ENCODE measurements at regions of chr10 and their contacts with region 1.

Region 1: DNA sequence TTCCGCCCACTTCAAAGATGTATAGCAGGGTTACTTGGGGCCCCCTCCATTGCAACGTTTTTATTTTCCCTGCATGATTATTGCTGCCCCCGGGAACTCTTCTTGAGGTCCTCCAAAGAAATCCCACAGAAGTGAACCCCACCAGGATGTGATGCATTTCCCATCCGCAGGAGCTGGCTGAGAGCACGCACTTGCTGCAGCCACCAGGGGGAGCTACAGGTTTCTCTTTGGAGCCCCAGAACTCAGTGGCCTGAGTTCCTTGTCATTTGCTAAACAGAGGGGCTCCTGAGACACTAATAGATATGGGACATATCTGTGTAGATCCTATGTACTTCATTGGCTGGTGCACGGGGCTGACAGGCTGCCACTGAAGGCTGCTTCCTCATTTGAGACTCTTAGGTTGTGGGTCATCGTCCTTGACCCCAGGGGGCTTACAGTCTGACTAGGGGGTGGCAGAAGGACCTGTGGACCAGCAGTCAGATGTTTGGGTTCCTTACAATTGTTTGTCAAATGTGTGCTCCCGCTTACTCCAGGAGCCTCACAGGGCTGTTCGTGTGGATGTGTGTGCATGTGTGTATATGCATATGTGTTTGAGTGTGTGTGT is 52.3 kb upstream of the ENO4 start:
- DNase-seq: peak; percentile 49 to 90
- H3K4me3 ChIP-seq: no peak overlapping the region
- H3K27ac ChIP-seq: no peak overlapping the region
- H3K4me1 ChIP-seq: peaks cover 2 to 8% (median 5%) of the 10 kb centered on the region in 4 experiments; a peak in 6 of 7 replicates
- H3K27me3 ChIP-seq: 0 out of 7 replicates have a peak, but pooled peaks cover 0 to 4% (median 1%) of the 10 kb centered on the region in 4 experiments
- CTCF ChIP-seq: peak; percentile 91 to 97 (median 93)
- EP300 ChIP-seq: no peak
- POLR2A ChIP-seq: no peak
- RAD21 ChIP-seq: peak; percentile 99

Region 2: GRCh38 chr10:116615199-116615776 is 181.7 kb before region 1 on chr10:
- CTCF ChIA-PET with region 1: no interaction called
- POLR2A ChIA-PET with region 1: no interaction called
- DNase-seq: no peak
- H3K4me3 ChIP-seq: no peak overlapping the region
- H3K27ac ChIP-seq: no peak overlapping the region
- H3K4me1 ChIP-seq: no peaks in the 10 kb centered on the region; a peak in 1 of 7 replicates
- H3K27me3 ChIP-seq: peaks cover 0 to 2% (median 0%) of the 10 kb centered on the region in 4 experiments; a peak in 2 of 7 replicates
- CTCF ChIP-seq: no peak
- EP300 ChIP-seq: no peak
- POLR2A ChIP-seq: no peak
- RAD21 ChIP-seq: no peak

Region 3: DNA sequence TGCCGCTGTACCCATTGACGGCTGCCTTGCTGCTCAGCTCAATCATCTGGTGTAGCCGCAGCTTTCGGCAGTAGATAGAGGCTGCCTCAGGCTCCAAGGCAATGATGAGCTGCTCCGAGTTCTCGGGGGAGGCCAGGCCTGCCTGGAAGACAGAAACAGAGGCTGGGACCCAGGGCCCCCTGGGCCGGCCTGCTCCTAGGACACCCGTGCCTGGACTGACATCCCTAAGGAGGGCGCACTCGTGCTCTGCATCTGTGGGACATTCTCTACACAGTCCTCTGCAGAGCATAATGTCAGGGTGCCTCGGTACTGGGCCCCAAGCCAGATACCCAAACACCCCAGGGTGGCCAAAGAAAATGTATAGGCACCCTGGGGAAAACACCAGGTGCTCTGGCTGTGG is 113.2 kb before region 1 on chr10:
- CTCF ChIA-PET with region 1: interaction called, 223 read pairs
- POLR2A ChIA-PET with region 1: no interaction called
- DNase-seq: no peak
- H3K4me3 ChIP-seq: no peak overlapping the region
- H3K27ac ChIP-seq: no peak overlapping the region
- H3K4me1 ChIP-seq: peaks cover 0 to 8% (median 0%) of the 10 kb centered on the region in 4 experiments; a peak in 1 of 7 replicates
- H3K27me3 ChIP-seq: no peaks in the 10 kb centered on the region
- CTCF ChIP-seq: no peak
- EP300 ChIP-seq: no peak
- POLR2A ChIP-seq: no peak
- RAD21 ChIP-seq: no peak; a peak in 1 of 4 replicates

Region 4: GRCh38 chr10:116809483-116810119 is 12.6 kb after region 1 on chr10:
- CTCF ChIA-PET with region 1: interaction called, 177 read pairs
- POLR2A ChIA-PET with region 1: interaction called, 3 read pairs
- DNase-seq: peak in 1 of 2 experiments; percentile 81
- H3K4me3 ChIP-seq: no peak overlapping the region
- H3K27ac ChIP-seq: no peak overlapping the region
- H3K4me1 ChIP-seq: peaks cover 0 to 2% (median 0%) of the 10 kb centered on the region in 4 experiments; a peak in 2 of 7 replicates
- H3K27me3 ChIP-seq: no peaks in the 10 kb centered on the region
- CTCF ChIP-seq: peak; percentile 52 to 82 (median 62)
- EP300 ChIP-seq: no peak
- POLR2A ChIP-seq: no peak
- RAD21 ChIP-seq: peak; percentile 34 to 48; a peak in 3 of 4 replicates

Region 5: DNA sequence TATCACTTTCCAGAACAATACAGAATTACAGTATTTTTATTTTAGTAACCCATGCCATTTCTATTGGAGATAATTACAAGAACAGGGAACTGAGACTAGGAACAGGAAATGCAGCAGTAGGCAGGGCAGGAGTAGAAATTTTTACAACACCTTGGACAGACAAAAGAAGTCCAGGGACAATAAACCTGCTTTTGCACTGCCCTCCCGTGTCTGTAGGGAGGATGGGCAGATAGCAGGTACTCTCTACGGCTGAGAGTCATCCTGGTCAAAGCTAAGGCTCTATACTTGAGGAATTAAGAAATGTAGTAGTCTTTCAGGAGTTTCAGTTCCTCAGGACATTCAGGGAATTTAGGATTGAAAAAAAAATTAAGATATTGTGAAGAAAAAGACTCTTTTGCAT is 277.6 kb after region 1 on chr10:
- CTCF ChIA-PET with region 1: interaction called, 31 read pairs
- POLR2A ChIA-PET with region 1: no interaction called
- DNase-seq: no peak
- H3K4me3 ChIP-seq: no peak overlapping the region
- H3K27ac ChIP-seq: no peak overlapping the region
- H3K4me1 ChIP-seq: no peaks in the 10 kb centered on the region
- H3K27me3 ChIP-seq: no peaks in the 10 kb centered on the region
- CTCF ChIP-seq: peak; percentile 40 to 62 (median 51)
- EP300 ChIP-seq: no peak
- POLR2A ChIP-seq: no peak
- RAD21 ChIP-seq: peak; percentile 80 to 81

Region 6: DNA sequence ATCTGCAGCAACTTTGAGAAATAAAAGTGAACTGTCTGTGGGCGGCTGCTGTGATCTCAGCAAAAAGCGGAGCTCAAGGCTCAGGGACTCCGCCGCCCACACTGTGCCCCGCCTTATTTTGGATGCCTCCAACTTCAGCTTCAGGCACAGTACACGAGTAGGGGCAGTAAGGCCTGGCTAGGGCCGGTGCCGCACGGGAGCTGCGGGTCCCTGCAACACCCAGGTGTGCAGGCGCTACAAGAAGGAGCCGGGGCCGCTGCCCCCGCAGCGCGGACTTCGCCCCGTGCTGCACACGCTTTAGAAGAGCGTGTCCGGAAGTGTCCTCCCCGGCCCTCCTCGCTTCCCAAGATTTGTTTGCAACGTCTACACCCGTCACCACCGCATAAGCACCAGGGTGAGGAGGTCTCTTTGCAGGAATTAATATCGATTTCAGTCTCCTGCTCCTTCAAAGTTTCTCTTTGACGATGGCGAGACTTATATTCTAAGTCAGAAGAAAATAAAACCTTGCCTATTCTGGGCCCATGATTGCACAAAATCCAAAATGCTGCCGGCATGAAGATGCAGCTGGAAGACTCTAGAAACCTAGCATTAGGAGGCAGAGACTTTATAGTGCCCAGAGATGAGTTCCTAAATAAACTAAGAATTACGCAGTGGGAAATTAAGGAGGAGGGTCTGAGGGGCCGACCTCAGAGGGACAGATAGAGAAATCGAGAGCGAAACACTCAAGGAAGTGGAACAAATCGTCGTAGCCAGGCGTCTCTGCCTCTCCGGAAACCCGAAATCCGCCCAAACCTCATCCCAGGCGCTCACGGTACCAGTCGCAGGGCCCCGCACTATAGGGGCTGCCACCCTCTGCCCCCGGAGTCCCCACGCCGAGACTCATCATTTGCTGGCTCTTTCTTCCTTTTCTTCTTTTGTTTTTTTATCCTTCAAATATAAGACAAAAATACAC is 334.6 kb after region 1 on chr10:
- CTCF ChIA-PET with region 1: interaction called, 11 read pairs
- POLR2A ChIA-PET with region 1: no interaction called
- DNase-seq: peak in 1 of 2 experiments; percentile 62
- H3K4me3 ChIP-seq: peak overlapping the region in 3 of 4 experiments; percentile 24 to 50 (median 27); a peak in 7 of 8 replicates
- H3K27ac ChIP-seq: no peak overlapping the region
- H3K4me1 ChIP-seq: peaks cover 3 to 24% (median 12%) of the 10 kb centered on the region in 4 experiments
- H3K27me3 ChIP-seq: peaks cover 72 to 98% (median 92%) of the 10 kb centered on the region in 4 experiments
- CTCF ChIP-seq: no peak
- EP300 ChIP-seq: no peak
- POLR2A ChIP-seq: no peak
- RAD21 ChIP-seq: no peak

Region 7: GRCh38 chr10:117159390-117159789 is 362.4 kb after region 1 on chr10:
- CTCF ChIA-PET with region 1: interaction called, 531 read pairs
- POLR2A ChIA-PET with region 1: no interaction called
- DNase-seq: peak; percentile 82 to 86
- H3K4me3 ChIP-seq: peak overlapping the region in 1 of 4 experiments; percentile 15; a peak in 1 of 8 replicates
- H3K27ac ChIP-seq: no peak overlapping the region
- H3K4me1 ChIP-seq: peaks cover 6 to 14% (median 10%) of the 10 kb centered on the region in 4 experiments; a peak in 6 of 7 replicates
- H3K27me3 ChIP-seq: peaks cover 78 to 97% (median 92%) of the 10 kb centered on the region in 4 experiments
- CTCF ChIP-seq: no peak
- EP300 ChIP-seq: peak in 1 of 2 experiments; percentile 88; a peak in 1 of 3 replicates
- POLR2A ChIP-seq: no peak
- RAD21 ChIP-seq: no peak

Measured in H1 (cell line).